ENCODE measurements at regions of chr11 and their contacts with region 1.

Region 1: DNA sequence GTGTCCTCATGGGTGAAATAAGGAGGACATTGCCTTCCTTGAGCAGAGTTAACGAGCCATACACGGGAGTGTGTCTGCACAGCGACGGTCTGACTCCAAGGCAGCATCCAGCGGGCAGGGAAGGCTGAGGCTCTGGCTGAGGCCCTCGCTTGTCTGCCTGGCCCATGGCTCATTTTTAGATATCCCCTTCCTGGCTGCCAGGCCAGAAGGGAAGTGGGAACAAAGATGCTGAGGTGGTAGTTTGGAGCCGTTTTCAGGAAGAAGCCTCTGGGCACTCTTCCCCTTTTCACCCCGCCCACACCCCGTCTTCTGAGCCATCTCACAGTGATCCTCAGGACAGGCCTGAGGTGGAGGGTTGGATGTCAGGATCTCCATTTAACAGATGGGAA is 3.0 kb upstream of the SLCO2B1 start:
- DNase-seq: no peak
- H3K4me3 ChIP-seq: no peak overlapping the region
- H3K27ac ChIP-seq: no peak overlapping the region
- H3K4me1 ChIP-seq: no peaks in the 10 kb centered on the region
- H3K27me3 ChIP-seq: no peaks in the 10 kb centered on the region
- CTCF ChIP-seq: no peak
- POLR2A ChIP-seq: no peak

Region 2: GRCh38 chr11:75195121-75195551 is 47.3 kb after region 1 on chr11:
- intact Hi-C with region 1: loop called (anchors 5 kb)
- DNase-seq: peak in 1 of 2 donors; percentile 51
- H3K4me3 ChIP-seq: no peak overlapping the region
- H3K27ac ChIP-seq: peak overlapping the region in 1 of 2 donors; percentile 55
- H3K4me1 ChIP-seq: peaks cover 0 to 5% of the 10 kb centered on the region in 2 donors
- H3K27me3 ChIP-seq: no peaks in the 10 kb centered on the region
- CTCF ChIP-seq: no peak
- POLR2A ChIP-seq: no peak

Measured in breast epithelium (tissue), 4 donors.